Activated CD4-positive, alpha-beta T cell treated with anti-CD3 and anti-CD28 coated beads, Interleukin-2, amount 10 ng/mL, durations not matched to agents 7 days and 5 days (primary cell): ENCODE measurements at regions of chr15 and their contacts with region 1.

Region 1: GRCh38 chr15:91055548-91056331 is 33.3 kb upstream of the VPS33B start:
- DNase-seq: peak; percentile 42
- H3K4me3 Mint-ChIP-seq: no peak overlapping the region
- H3K27ac Mint-ChIP-seq: no peak overlapping the region
- H3K4me1 Mint-ChIP-seq: no peaks in the 10 kb centered on the region
- H3K27me3 Mint-ChIP-seq: peaks cover 62% of the 10 kb centered on the region

Region 2: GRCh38 chr15:91040856-91041255 is 14.9 kb before region 1 on chr15:
- CTCF ChIA-PET with region 1: no interaction called
- POLR2A ChIA-PET with region 1: no interaction called
- DNase-seq: no peak
- H3K4me3 Mint-ChIP-seq: no peak overlapping the region
- H3K27ac Mint-ChIP-seq: no peak overlapping the region
- H3K4me1 Mint-ChIP-seq: peaks cover 2% of the 10 kb centered on the region
- H3K27me3 Mint-ChIP-seq: peaks cover 10% of the 10 kb centered on the region

Region 3: GRCh38 chr15:91068966-91069365 is 13.2 kb after region 1 on chr15:
- CTCF ChIA-PET with region 1: no interaction called
- POLR2A ChIA-PET with region 1: no interaction called
- DNase-seq: no peak
- H3K4me3 Mint-ChIP-seq: no peak overlapping the region
- H3K27ac Mint-ChIP-seq: no peak overlapping the region
- H3K4me1 Mint-ChIP-seq: no peaks in the 10 kb centered on the region
- H3K27me3 Mint-ChIP-seq: peaks cover 28% of the 10 kb centered on the region

Region 4: DNA sequence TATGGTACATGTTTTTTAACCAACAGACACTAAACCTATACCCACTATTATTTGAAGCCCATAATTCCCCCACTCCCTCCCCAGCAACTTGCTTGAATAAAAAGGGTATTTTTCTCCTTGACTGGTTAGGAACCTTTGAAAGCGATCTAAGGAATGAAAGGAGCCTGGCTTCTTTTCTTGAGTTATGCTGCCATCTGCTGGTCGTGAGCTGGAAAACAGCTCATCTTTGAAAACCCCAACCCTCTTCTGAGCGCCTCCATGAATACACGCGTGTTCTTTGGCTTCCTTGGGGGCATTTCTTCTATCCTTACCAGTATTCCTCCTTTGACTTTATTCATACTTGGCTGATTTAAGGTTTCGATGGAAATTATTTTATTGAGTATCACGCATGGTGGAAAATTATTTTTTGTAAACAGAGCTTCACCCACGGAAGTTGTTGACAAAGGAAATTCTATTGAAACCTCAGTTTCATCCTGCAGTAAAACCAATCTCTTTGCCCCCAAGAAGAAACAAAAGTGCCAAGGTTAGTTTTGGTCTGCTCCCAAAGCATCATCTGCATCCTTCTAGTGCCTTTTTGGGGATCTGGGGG is 215.9 kb after region 1 on chr15:
- CTCF ChIA-PET with region 1: interaction called, 14 read pairs
- POLR2A ChIA-PET with region 1: no interaction called
- DNase-seq: peak; percentile 69
- H3K4me3 Mint-ChIP-seq: peak overlapping the region; percentile 3
- H3K27ac Mint-ChIP-seq: no peak overlapping the region
- H3K4me1 Mint-ChIP-seq: peaks cover 7% of the 10 kb centered on the region
- H3K27me3 Mint-ChIP-seq: peaks cover 37% of the 10 kb centered on the region